ENCODE measurements at regions of chr10 and their contacts with region 1.

Region 1: GRCh38 chr10:59682986-59683937 is 26.4 kb downstream of the SLC16A9 start:
- DNase-seq: no peak
- H3K4me3 ChIP-seq: no peak overlapping the region
- CTCF ChIP-seq: no peak

Region 2: GRCh38 chr10:59648711-59649201 is 34.5 kb before region 1 on chr10:
- in situ Hi-C with region 1: loop called (anchors 5 kb)
- DNase-seq: peak; percentile 55
- H3K4me3 ChIP-seq: no peak overlapping the region
- CTCF ChIP-seq: no peak

Measured in astrocyte of the cerebellum (primary cell).